ENCODE measurements at regions of chr4 and their contacts with region 1.

Region 1: GRCh38 chr4:76179398-76180318 is 31.5 kb upstream of the NUP54 start:
- DNase-seq: peak; percentile 20
- H3K4me3 ChIP-seq: no peak overlapping the region
- H3K27ac ChIP-seq: no peak overlapping the region
- H3K4me1 ChIP-seq: peaks cover 0 to 7% (median 0%) of the 10 kb centered on the region in 3 donors
- H3K27me3 ChIP-seq: no peaks in the 10 kb centered on the region
- CTCF ChIP-seq: peak; percentile 81 to 94 (median 88)
- POLR2A ChIP-seq: no peak

Region 2: DNA sequence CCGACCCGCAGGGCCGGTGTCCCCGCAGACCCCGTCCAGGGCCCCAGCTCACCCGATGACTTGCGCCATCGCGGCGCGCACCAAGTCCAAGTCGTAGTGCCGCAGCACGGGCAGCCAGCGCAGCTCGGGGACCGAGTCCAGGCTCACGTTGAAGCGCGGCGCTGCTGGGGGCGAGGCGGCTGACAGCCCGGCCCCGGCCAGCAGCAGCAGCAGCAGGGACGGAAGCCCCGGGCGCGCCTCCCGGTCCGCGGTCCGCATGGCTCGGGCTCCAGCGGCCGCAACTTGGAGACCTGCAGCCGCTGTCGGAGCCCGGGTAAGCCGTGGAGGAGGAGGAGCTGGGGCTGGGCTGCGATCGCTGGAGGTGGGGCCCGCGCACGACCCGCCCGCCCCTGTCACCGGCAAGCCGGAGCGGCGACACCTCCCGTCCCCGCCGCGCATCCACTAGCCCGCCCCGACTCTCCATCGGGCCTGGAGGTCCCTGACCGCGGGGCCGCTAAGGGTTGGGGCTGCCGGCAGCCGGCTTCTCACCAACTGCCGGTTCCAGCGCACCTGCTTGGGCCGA is 238.9 kb before region 1 on chr4 and contains the start of gene NAAA:
- intact Hi-C with region 1: no loop called
- DNase-seq: peak; percentile 29
- H3K4me3 ChIP-seq: peak within 1 kb of the TSS; percentile 73 to 88 (median 82)
- H3K27ac ChIP-seq: peak within 1 kb of the TSS; percentile 82 to 89 (median 86)
- H3K4me1 ChIP-seq: peaks cover 5 to 16% (median 10%) of the 10 kb centered on the region in 3 donors
- H3K27me3 ChIP-seq: no peaks in the 10 kb centered on the region
- CTCF ChIP-seq: peak in 3 of 6 experiments; percentile 49 to 54 (median 49)
- POLR2A ChIP-seq: peak in 2 of 4 donors; percentile 11 to 64
- total RNA-seq, gene NAAA: 53.6 to 152 (median 86.2) TPM

Region 3: GRCh38 chr4:76016393-76016792 is 163.3 kb before region 1 on chr4:
- intact Hi-C with region 1: no loop called
- DNase-seq: no peak
- H3K4me3 ChIP-seq: no peak overlapping the region
- H3K27ac ChIP-seq: no peak overlapping the region
- H3K4me1 ChIP-seq: peaks cover 6 to 17% (median 11%) of the 10 kb centered on the region in 3 donors
- H3K27me3 ChIP-seq: no peaks in the 10 kb centered on the region
- CTCF ChIP-seq: no peak
- POLR2A ChIP-seq: no peak

Region 4: DNA sequence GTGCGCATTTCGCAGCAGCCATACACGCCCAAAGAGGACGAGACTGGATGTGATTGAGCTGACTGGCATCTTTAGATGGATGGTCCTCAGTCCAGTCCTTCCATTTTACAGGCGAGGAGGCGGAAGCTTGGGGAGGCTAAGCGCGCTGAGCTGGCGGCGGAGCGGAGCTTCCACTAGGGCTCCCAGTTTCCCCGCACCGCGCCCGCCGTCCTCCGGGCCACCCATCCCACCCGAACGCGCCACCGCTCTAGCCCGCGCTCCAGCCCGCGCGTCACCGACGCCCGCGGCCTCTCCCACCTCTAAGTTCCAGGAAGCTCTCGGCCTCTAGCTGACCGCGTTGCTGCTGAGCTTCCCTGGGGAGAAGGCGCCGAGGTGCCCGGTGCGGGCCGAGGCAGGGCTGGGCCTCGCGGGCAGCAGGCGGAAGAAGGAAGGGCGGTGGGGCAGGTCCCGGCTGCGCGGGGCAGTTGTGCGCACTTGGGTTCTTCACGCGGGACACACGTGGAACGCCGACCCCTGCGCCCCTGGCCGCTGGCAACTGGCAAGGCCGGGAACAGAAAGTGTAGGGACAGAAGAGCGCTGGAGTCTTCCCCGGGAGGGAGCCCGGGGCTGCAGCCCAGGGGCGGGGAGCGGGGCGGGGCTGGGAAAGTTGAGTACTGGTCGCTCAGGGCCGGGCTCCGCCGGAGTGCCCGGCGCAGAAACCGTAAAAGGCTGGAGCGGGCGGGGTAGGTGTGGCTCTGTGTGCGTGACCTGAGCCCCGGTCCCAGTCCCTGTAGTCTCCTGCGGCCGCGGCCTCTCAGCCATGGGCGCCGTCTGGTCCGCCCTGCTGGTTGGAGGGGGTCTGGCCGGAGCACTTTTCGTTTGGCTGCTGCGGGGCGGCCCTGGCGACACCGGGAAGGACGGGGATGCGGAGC is 126.6 kb after region 1 on chr4 and contains the start of gene STBD1:
- intact Hi-C with region 1: loop called (anchors 10 kb)
- DNase-seq: no peak
- H3K4me3 ChIP-seq: peak within 1 kb of the TSS; percentile 80 to 96 (median 84)
- H3K27ac ChIP-seq: peak within 1 kb of the TSS; percentile 79 to 93 (median 84)
- H3K4me1 ChIP-seq: peaks cover 0 to 44% (median 18%) of the 10 kb centered on the region in 3 donors
- H3K27me3 ChIP-seq: no peaks in the 10 kb centered on the region
- CTCF ChIP-seq: no peak
- POLR2A ChIP-seq: peak in 2 of 4 donors; percentile 15 to 33
- total RNA-seq, gene STBD1: 1.8 to 3.8 (median 2.4) TPM

Region 5: GRCh38 chr4:76504613-76505465 is 325.2 kb after region 1 on chr4:
- intact Hi-C with region 1: loop called (anchors 10 kb)
- DNase-seq: no peak
- H3K4me3 ChIP-seq: no peak overlapping the region
- H3K27ac ChIP-seq: no peak overlapping the region
- H3K4me1 ChIP-seq: no peaks in the 10 kb centered on the region
- H3K27me3 ChIP-seq: peaks cover 0 to 3% (median 0%) of the 10 kb centered on the region in 4 donors
- CTCF ChIP-seq: peak; percentile 40 to 74 (median 66)
- POLR2A ChIP-seq: no peak